Activated naive CD4-positive, alpha-beta T cell treated with anti-CD3 and anti-CD28 coated beads, Interleukin-2, amount 10 ng/mL, durations not matched to agents 7 days and 5 days (primary cell): ENCODE measurements at regions of chr3 and their contacts with region 1.

Region 1: DNA sequence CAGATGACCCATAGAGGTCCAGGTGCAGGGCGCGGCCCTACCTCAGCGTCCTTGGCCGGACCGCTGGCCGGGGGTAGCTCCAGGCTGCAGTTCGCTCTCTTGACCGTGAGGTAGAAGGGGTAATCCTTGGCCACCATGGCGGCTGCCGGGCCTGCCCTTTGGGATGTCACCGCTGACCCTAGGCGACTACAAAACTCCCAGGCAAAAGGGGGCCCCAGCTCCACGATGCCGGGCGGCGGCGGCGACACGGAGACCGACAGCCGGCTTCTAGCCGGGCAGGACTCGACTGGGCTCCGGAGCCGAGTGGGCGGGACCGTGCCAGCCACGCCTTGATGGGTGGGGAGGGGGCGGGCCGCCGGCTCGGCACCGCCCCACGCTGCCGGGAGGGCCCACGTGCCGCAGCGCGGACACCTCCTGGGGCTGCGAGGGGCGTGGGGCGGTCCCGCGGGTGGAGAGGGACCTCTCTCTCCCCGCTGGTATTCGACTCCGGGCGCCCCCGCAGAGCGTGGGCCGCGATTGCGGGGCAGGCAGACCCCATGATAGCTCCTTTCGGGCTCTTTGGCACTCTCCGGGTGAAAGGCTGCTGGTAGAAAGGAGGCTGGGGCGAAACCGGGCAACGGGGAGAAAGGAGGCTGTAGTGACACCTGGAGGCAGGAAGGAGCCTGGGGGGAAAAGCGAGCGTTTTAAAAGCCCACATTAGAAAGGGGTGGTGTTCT is at the start of gene ARHGEF3:
- DNase-seq: peak; percentile 90
- H3K4me3 Mint-ChIP-seq: peak within 1 kb of the TSS; percentile 84
- H3K27ac Mint-ChIP-seq: peak within 1 kb of the TSS; percentile 85
- H3K4me1 Mint-ChIP-seq: peaks cover 39% of the 10 kb centered on the region
- H3K27me3 Mint-ChIP-seq: no peaks in the 10 kb centered on the region

Region 2: GRCh38 chr3:56502738-56503137 is 299.1 kb before region 1 on chr3:
- CTCF ChIA-PET with region 1: no interaction called
- DNase-seq: no peak
- H3K4me3 Mint-ChIP-seq: no peak overlapping the region
- H3K27ac Mint-ChIP-seq: no peak overlapping the region
- H3K4me1 Mint-ChIP-seq: no peaks in the 10 kb centered on the region
- H3K27me3 Mint-ChIP-seq: no peaks in the 10 kb centered on the region

Region 3: GRCh38 chr3:56725175-56725574 is 76.6 kb before region 1 on chr3:
- CTCF ChIA-PET with region 1: interaction called, 34 read pairs
- DNase-seq: peak; percentile 82
- H3K4me3 Mint-ChIP-seq: peak overlapping the region; percentile 56
- H3K27ac Mint-ChIP-seq: peak overlapping the region; percentile 91
- H3K4me1 Mint-ChIP-seq: peaks cover 60% of the 10 kb centered on the region
- H3K27me3 Mint-ChIP-seq: no peaks in the 10 kb centered on the region

Region 4: DNA sequence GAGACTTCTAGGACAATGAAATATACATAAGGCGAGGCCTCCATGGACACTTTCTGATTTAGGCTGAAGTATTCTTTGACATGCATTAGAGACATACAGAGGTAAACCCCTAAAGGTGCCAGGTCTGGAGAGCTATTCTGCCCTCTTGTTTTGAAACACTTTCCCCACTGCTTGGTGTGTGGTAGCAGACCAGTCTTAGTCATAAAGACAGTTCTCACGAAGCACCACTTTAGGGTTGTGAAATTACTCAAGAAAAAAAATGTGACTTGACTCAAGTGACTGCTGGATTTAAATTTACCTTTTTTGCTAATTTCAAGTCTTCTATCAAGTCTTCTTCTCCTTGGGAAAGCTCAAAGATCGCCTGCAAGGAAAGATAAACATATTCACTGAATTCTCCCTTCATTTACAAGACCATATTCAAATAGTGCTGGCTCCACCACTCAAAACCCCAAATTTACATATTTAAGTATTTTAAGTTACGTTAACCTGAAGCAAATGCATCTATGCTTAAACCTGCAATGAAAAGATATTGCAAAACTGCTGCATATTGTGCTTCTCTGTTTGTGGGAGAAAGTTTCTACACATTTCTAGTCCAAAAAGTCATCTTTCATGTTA is 48.5 kb before region 1 on chr3:
- CTCF ChIA-PET with region 1: interaction called, 73 read pairs
- DNase-seq: peak; percentile 39
- H3K4me3 Mint-ChIP-seq: peak overlapping the region; percentile 85
- H3K27ac Mint-ChIP-seq: peak overlapping the region; percentile 96
- H3K4me1 Mint-ChIP-seq: peaks cover 69% of the 10 kb centered on the region
- H3K27me3 Mint-ChIP-seq: no peaks in the 10 kb centered on the region

Region 5: GRCh38 chr3:56783644-56784447 is 18.0 kb before region 1 on chr3:
- CTCF ChIA-PET with region 1: interaction called, 92 read pairs
- DNase-seq: peak; percentile 84
- H3K4me3 Mint-ChIP-seq: peak overlapping the region; percentile 62
- H3K27ac Mint-ChIP-seq: peak overlapping the region; percentile 99
- H3K4me1 Mint-ChIP-seq: peaks cover 98% of the 10 kb centered on the region
- H3K27me3 Mint-ChIP-seq: no peaks in the 10 kb centered on the region

Region 6: GRCh38 chr3:56915966-56916586 is 114.3 kb after region 1 on chr3:
- CTCF ChIA-PET with region 1: interaction called, 12 read pairs
- DNase-seq: peak; percentile 88
- H3K4me3 Mint-ChIP-seq: peak overlapping the region; percentile 98
- H3K27ac Mint-ChIP-seq: peak overlapping the region; percentile 100
- H3K4me1 Mint-ChIP-seq: peaks cover 72% of the 10 kb centered on the region
- H3K27me3 Mint-ChIP-seq: no peaks in the 10 kb centered on the region

Region 7: DNA sequence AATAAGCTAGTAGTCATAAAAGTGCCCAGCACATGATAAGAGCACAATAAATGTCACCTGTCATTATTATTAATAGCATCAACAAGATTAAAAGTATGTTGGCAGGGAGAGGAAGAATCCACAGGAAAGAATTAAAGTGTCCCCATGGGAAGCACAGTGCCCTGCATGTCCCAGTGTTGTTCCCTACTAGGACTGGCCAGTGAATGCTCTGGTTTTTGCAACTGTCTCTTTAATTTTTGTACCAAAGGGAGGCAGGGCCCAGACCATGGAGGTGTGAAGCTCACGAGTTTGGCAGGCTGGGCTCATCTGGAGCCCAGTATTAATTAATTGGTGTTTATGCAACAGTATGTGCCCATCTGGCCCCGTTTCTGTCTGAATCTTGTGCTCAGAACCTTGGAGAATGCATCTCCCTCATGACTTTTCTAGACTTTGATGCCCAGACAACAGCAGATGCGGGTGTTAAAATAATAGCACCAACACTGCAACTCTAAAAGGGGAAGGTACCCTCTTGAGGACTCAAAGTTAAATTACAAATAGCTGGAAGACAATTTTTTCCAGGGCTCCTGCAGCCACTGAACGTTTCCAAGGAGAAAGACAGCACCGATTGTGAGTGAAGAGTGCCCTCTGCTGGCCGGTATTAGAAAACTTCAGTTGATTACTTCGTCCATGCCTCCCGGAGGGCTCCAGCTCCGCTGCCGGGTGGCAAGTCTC is 186.8 kb after region 1 on chr3:
- CTCF ChIA-PET with region 1: interaction called, 171 read pairs
- DNase-seq: peak; percentile 79
- H3K4me3 Mint-ChIP-seq: no peak overlapping the region
- H3K27ac Mint-ChIP-seq: no peak overlapping the region
- H3K4me1 Mint-ChIP-seq: peaks cover 27% of the 10 kb centered on the region
- H3K27me3 Mint-ChIP-seq: peaks cover 27% of the 10 kb centered on the region